ENCODE measurements at regions of chr1 and their contacts with region 1.

Region 1: DNA sequence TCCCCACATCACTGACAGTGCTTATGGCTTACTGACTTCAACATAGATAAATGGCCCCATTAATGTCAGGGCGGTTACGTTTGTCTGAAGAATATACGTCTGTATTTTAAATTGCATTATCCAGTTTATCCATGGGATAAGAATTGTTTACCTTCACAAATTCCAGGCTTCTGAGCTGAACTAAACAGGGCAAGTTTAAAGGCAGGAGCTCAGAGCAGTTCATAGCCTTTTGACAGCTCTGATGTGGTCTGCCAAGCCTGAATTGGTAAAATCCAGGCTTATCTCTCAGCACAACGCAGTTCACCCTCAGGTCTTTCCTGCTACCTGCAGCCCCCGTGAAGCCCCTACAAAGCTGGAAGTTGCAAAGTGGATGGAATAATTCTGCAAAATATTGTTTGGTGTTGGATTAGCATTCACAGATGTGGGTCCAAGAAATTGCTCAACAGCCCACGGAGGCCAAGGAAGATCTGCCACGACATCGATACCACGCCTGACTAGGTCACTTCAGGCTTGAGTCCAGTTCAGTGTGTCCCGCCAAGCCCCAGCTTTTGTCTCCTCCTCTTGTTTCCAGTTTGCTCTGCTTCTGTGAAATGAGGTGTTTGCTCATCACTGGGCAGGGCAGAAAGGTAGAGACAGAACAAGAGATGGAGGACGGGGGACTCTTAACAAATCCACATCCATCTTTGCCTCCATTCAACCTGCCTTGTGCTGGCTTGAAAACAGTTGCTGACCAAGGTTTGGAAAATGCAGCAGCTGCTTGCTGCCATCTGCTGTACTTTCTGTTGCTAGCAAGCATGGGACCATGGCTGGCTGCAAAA is 79.8 kb upstream of the GREM2 start:
- DNase-seq: no peak
- H3K4me3 Mint-ChIP-seq: no peak overlapping the region
- H3K27ac Mint-ChIP-seq: no peak overlapping the region
- H3K4me1 Mint-ChIP-seq: peaks cover 12% of the 10 kb centered on the region
- H3K27me3 Mint-ChIP-seq: no peaks in the 10 kb centered on the region

Region 2: GRCh38 chr1:240189386-240189989 is 502.2 kb before region 1 on chr1:
- intact Hi-C with region 1: loop called (anchors 10 kb)
- DNase-seq: peak; percentile 7
- H3K4me3 Mint-ChIP-seq: no peak overlapping the region
- H3K27ac Mint-ChIP-seq: no peak overlapping the region
- H3K4me1 Mint-ChIP-seq: no peaks in the 10 kb centered on the region
- H3K27me3 Mint-ChIP-seq: no peaks in the 10 kb centered on the region

Region 3: DNA sequence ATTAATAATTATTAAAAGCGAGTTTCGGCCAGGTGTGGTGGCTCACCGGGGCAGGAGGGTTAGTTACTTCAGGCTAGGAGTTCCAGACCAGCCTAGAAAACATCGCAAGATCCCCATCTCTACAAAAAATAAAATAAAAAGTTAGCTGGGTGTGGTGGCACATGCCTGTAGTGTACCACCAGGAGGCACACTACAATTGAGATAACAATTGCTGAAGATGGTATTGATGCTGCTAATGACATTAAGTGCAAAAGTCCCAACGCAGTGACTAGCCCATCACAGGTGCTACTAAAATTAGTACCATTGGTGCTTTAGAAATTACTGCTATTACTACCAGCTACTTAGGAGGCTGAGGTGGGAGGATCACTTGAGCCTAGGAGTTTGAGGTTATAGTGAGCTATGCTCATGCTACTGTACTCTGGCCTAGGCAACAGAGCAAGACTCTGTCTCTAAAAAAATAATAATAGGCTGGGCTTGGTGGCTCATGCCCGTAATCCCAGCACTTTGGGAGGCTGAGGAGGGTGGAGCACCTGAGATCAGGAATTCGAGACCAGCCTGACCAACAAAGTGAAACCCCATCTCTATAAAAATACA is 236.4 kb before region 1 on chr1:
- intact Hi-C with region 1: loop called (anchors 1 kb)
- DNase-seq: no peak
- H3K4me3 Mint-ChIP-seq: no peak overlapping the region
- H3K27ac Mint-ChIP-seq: no peak overlapping the region
- H3K4me1 Mint-ChIP-seq: no peaks in the 10 kb centered on the region
- H3K27me3 Mint-ChIP-seq: no peaks in the 10 kb centered on the region

Region 4: GRCh38 chr1:240611619-240612480 is 79.9 kb before region 1 on chr1 and contains the start of gene GREM2:
- intact Hi-C with region 1: loop called (anchors 2 kb)
- DNase-seq: peak; percentile 31
- H3K4me3 Mint-ChIP-seq: peak within 1 kb of the TSS; percentile 95
- H3K27ac Mint-ChIP-seq: peak within 1 kb of the TSS; percentile 71
- H3K4me1 Mint-ChIP-seq: peaks cover 32% of the 10 kb centered on the region
- H3K27me3 Mint-ChIP-seq: peaks cover 38% of the 10 kb centered on the region
- total RNA-seq, gene GREM2: 0.05 TPM in 2 replicates